Activated T-helper 1 cell treated with anti-CD3 and anti-CD28 coated beads, Interleukin-12 subunit alpha, Interleukin-12 subunit beta, Interleukin-2, Interleukin-4 antibody, amounts not matched to agents 30 ng/mL and 10 ng/mL and 1 ng/mL, durations not matched to agents 14 hours and 24 hours and 36 hours (primary cell): ENCODE measurements at regions of chr20 and their contacts with region 1.

Region 1: GRCh38 chr20:50115591-50116372 is 2.8 kb upstream of the UBE2V1 start:
- DNase-seq: peak; percentile 86
- H3K4me3 Mint-ChIP-seq: peak overlapping the region; percentile 100
- H3K27ac Mint-ChIP-seq: peak overlapping the region; percentile 88
- H3K4me1 Mint-ChIP-seq: peaks cover 45% of the 10 kb centered on the region
- H3K27me3 Mint-ChIP-seq: no peaks in the 10 kb centered on the region

Region 2: GRCh38 chr20:49219089-49219923 is 896.5 kb before region 1 on chr20 and contains the start of gene DDX27:
- intact Hi-C with region 1: loop called (anchors 5 kb)
- DNase-seq: peak; percentile 95
- H3K4me3 Mint-ChIP-seq: peak within 1 kb of the TSS; percentile 97
- H3K27ac Mint-ChIP-seq: peak within 1 kb of the TSS; percentile 98
- H3K4me1 Mint-ChIP-seq: peaks cover 26% of the 10 kb centered on the region
- H3K27me3 Mint-ChIP-seq: no peaks in the 10 kb centered on the region
- total RNA-seq, gene DDX27: 53.1 and 57.4 TPM in 2 replicates

Region 3: DNA sequence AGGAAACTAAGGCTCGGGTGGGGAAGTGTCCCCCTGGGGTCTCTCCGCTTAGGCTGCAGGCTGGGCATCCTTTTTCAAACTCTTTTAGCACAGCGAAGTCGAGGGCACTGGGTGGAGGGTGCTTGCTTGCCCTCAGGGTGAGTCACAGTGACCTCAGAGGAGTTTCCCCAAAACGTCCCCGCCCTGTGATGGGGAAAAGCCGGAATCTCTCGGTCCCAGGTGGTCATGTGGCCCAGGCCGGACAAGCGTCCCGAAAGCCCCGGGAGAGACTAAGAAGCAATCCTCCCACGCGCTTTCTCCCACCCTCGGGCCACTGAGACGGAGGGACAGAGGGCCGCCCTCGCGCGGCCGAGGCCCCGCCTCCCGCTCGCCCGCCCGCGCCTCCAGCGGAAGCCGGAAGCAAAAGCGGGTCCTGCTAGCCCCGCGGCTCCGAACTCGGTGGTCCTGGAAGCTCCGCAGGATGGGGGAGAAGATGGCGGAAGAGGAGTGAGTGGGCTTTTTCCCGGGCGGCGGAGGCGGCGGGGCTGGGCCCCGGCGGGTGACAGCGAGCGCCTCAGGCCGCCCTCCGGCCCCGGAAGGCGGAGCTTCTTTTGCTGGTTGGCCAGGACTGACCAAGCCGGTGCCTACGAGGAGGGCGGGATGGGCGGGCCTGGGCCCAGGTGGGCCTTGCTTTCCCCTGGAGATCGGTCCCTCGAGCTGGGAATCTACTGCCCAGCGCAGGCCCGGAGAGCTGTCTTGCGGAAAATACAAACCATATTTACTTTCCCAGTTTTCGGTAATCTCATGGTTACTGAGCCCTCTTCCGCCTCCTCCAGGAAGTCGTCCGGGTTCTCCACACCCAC is 303.1 kb before region 1 on chr20 and contains the start of gene SLC9A8:
- intact Hi-C with region 1: loop called (anchors 5 kb)
- DNase-seq: peak; percentile 83
- H3K4me3 Mint-ChIP-seq: peak within 1 kb of the TSS; percentile 91
- H3K27ac Mint-ChIP-seq: peak within 1 kb of the TSS; percentile 97
- H3K4me1 Mint-ChIP-seq: peaks cover 50% of the 10 kb centered on the region
- H3K27me3 Mint-ChIP-seq: no peaks in the 10 kb centered on the region
- total RNA-seq, gene SLC9A8: 16.2 and 20.8 TPM in 2 replicates

Region 4: GRCh38 chr20:50153485-50154377 is 37.9 kb after region 1 on chr20 and contains the start of gene PEDS1:
- intact Hi-C with region 1: loop called (anchors 1 kb)
- DNase-seq: peak; percentile 86
- H3K4me3 Mint-ChIP-seq: peak within 1 kb of the TSS; percentile 87
- H3K27ac Mint-ChIP-seq: peak within 1 kb of the TSS; percentile 79
- H3K4me1 Mint-ChIP-seq: peaks cover 48% of the 10 kb centered on the region
- H3K27me3 Mint-ChIP-seq: peaks cover 4% of the 10 kb centered on the region
- total RNA-seq, gene PEDS1: 30.7 and 33.4 TPM in 2 replicates

Region 5: GRCh38 chr20:50460460-50461267 is 344.9 kb after region 1 on chr20:
- intact Hi-C with region 1: loop called (anchors 10 kb)
- DNase-seq: peak; percentile 76
- H3K4me3 Mint-ChIP-seq: no peak overlapping the region
- H3K27ac Mint-ChIP-seq: no peak overlapping the region
- H3K4me1 Mint-ChIP-seq: peaks cover 25% of the 10 kb centered on the region
- H3K27me3 Mint-ChIP-seq: peaks cover 4% of the 10 kb centered on the region

Region 6: DNA sequence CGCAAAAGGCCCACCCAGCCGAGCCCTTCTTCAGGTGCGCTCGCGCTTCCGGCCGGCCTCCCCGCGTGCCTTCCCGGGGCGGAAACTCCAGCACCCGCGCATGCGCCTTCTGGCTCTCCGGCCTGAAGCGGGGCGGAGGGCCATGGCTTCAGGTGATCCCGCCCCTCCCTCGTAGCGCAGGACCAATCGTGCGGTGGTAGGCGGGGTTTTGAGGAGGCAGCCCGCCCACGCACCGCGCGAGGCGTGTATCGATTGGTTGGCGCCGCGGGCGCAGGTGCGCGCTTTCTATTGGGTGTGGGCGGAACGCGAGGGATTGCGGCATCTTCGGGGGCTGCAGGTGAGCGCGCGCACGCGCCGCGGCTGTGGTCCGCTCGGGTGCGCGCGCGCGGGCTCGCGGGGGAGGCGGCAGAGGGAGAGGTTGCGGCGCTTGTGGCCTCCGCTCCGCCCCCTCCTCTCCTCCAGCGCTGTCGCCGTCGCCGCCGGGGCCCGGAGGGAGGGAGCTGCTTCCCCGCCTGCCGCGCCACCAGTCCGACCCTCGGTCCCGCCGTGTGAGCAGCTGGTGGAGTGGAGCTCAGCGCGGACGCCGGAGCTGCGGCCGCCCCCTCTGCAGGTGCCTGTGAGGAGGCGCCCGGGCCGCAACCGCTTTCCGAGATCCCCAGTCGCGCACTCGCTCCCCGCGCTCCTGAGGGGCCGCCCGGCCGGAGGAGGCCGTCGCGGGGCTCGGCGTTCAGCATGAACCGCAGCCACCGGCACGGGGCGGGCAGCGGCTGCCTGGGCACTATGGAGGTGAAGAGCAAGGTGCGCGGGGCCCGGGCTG is 615.5 kb after region 1 on chr20 and contains the start of gene PARD6B:
- intact Hi-C with region 1: loop called (anchors 2 kb)
- DNase-seq: peak; percentile 99
- H3K4me3 Mint-ChIP-seq: peak within 1 kb of the TSS; percentile 86
- H3K27ac Mint-ChIP-seq: peak within 1 kb of the TSS; percentile 92
- H3K4me1 Mint-ChIP-seq: peaks cover 38% of the 10 kb centered on the region
- H3K27me3 Mint-ChIP-seq: peaks cover 1% of the 10 kb centered on the region
- total RNA-seq, gene PARD6B: 6.3 and 7.1 TPM in 2 replicates